Heart left ventricle (tissue), 16 donors: ENCODE measurements at regions of chr5 and their contacts with region 1.

Region 1: GRCh38 chr5:134803821-134804220 is 41.9 kb upstream of the C5orf24 start:
- DNase-seq: no peak
- ATAC-seq: no peak
- H3K4me3 ChIP-seq: no peak overlapping the region
- H3K27ac ChIP-seq: no peak overlapping the region
- H3K4me1 ChIP-seq: no peaks in the 10 kb centered on the region
- H3K27me3 ChIP-seq: no peaks in the 10 kb centered on the region
- CTCF ChIP-seq: no peak
- POLR2A ChIP-seq: no peak

Region 2: DNA sequence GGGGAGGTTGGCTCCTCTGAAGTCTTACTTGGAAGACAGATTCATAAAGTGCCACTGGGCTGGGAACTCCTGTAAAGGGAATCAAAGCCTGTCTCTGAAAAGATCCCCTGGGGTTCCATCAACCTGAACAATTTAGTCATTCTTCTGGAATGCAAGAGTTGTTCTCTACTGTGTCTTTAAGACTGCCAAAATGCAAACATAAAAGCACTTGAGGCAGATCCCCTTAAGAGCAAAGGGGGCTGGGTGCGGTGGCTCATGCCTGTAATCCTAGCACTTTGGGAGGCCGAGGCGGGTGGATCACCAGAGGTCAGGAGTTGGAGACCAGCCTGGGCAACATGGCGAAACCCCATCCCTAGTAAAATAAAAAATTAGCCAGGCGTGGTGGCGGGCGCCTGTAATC is 408.9 kb before region 1 on chr5:
- intact Hi-C with region 1: loop called in 1 of 10 experiments (anchors 10 kb)
- DNase-seq: no peak
- ATAC-seq: no peak
- H3K4me3 ChIP-seq: no peak overlapping the region
- H3K27ac ChIP-seq: no peak overlapping the region
- H3K4me1 ChIP-seq: peaks cover 0 to 8% (median 0%) of the 10 kb centered on the region in 12 donors
- H3K27me3 ChIP-seq: no peaks in the 10 kb centered on the region
- CTCF ChIP-seq: no peak
- POLR2A ChIP-seq: no peak

Region 3: DNA sequence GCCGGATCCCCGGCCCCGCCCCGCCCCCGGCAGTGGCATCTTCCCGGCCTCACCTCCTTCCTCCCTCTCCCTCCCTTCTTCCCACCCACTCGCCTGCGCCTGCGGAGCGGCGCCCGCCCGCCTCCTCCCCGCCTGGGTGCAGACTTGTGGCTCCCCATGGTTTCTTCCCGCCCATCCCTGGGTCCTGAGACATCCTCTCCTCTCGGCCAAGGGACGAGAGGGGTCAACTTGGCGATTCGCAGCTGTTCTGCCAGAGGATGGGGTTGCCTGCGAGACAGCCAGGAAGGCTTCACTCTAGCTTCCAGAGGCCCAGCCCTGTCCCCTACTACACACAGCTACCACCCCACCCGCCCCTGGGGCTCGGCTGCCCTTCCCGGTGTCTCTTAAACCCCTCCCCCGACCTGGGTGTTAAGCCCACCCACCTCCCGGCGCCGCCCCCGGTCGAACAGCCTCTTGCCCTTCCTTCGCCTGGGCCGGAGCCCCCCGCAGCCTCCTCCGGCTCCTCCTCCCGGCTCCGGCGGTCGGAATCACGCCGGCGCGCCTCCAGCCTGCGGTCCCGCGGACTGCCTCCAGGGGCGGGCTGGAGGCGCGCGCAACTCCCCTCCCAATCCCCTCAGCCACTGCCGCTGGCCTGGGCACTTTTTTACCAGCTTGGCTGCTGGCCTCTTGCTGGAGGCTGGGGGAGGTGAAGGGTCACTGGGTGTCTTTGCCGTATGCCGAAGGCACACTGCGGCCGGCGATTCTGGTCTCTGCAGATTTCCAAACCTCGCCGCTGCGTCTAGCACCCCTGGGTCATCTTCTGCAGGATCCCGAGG is 276.5 kb before region 1 on chr5:
- intact Hi-C with region 1: no loop called
- DNase-seq: peak; percentile 89 to 93 (median 90)
- ATAC-seq: peak; percentile 38 to 69 (median 69)
- H3K4me3 ChIP-seq: peak overlapping the region; percentile 62 to 98 (median 82)
- H3K27ac ChIP-seq: peak overlapping the region; percentile 94 to 100 (median 98)
- H3K4me1 ChIP-seq: peaks cover 6 to 58% (median 48%) of the 10 kb centered on the region in 12 donors
- H3K27me3 ChIP-seq: no peaks in the 10 kb centered on the region
- CTCF ChIP-seq: peak; percentile 68 to 99 (median 76)
- POLR2A ChIP-seq: peak in 1 of 2 donors; percentile 62

Region 4: DNA sequence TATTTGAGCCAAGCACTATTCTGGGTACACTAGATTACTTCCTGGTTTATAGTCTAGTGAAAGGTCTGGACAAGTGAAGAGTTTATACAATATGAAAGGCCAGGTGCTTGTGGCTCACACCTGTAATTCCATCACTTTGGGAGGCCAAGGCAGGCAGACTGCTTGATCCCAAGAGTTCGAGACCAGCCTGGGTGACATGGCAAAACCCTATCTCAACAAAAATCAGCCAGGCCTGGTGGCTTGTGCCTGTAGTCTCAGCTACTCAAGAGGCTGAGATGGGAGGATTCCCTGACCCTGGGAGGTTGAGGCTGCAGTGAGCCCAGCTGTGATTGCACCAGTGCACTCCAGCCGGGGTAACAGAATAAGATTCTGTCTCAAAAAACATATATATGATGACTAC is 60.9 kb after region 1 on chr5:
- intact Hi-C with region 1: no loop called
- DNase-seq: no peak
- ATAC-seq: no peak
- H3K4me3 ChIP-seq: no peak overlapping the region
- H3K27ac ChIP-seq: no peak overlapping the region
- H3K4me1 ChIP-seq: no peaks in the 10 kb centered on the region
- H3K27me3 ChIP-seq: no peaks in the 10 kb centered on the region
- CTCF ChIP-seq: no peak
- POLR2A ChIP-seq: no peak

Region 5: GRCh38 chr5:134935711-134936602 is 132.1 kb after region 1 on chr5:
- intact Hi-C with region 1: no loop called
- DNase-seq: no peak
- ATAC-seq: no peak
- H3K4me3 ChIP-seq: no peak overlapping the region
- H3K27ac ChIP-seq: no peak overlapping the region
- H3K4me1 ChIP-seq: no peaks in the 10 kb centered on the region
- H3K27me3 ChIP-seq: no peaks in the 10 kb centered on the region
- CTCF ChIP-seq: no peak
- POLR2A ChIP-seq: no peak